Heart left ventricle (tissue), 16 donors: ENCODE measurements at regions of chr6 and their contacts with region 1.

Region 1: GRCh38 chr6:35327349-35328027 is 14.9 kb upstream of the PPARD start:
- DNase-seq: peak in 4 of 5 donors; percentile 41 to 74 (median 60)
- ATAC-seq: peak; percentile 67 to 85 (median 83)
- H3K4me3 ChIP-seq: no peak overlapping the region
- H3K27ac ChIP-seq: no peak overlapping the region
- H3K4me1 ChIP-seq: peaks cover 0 to 8% (median 0%) of the 10 kb centered on the region in 12 donors
- H3K27me3 ChIP-seq: no peaks in the 10 kb centered on the region
- CTCF ChIP-seq: peak; percentile 27 to 66 (median 51)
- POLR2A ChIP-seq: no peak

Region 2: DNA sequence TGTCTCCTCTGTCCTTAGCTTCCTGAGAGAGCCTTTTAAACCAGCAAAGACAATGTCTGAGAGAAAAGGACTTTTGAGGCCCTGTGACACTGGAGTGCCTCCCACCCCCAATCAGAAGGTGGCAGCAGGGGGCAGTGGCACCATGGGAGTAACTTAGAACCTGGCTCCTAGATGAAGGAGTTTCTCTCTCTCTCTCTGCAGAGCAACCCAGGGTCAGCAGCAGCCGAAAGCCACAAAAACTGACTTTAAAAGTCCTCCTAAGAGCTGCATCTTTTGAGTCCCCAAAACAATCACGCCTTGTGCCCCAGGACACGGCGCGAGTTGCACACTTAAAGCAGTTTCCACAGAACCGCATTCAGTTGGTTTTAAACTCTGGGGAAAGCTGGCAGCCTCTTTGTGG is 181.0 kb before region 1 on chr6:
- intact Hi-C with region 1: loop called in 1 of 10 experiments (anchors 5 kb)
- DNase-seq: peak in 4 of 5 donors; percentile 25 to 51 (median 45)
- ATAC-seq: peak; percentile 83 to 92 (median 91)
- H3K4me3 ChIP-seq: no peak overlapping the region
- H3K27ac ChIP-seq: no peak overlapping the region
- H3K4me1 ChIP-seq: peaks cover 0 to 11% (median 0%) of the 10 kb centered on the region in 12 donors
- H3K27me3 ChIP-seq: peaks cover 0 to 2% (median 0%) of the 10 kb centered on the region in 9 donors
- CTCF ChIP-seq: peak; percentile 30 to 70 (median 60)
- POLR2A ChIP-seq: no peak

Region 3: DNA sequence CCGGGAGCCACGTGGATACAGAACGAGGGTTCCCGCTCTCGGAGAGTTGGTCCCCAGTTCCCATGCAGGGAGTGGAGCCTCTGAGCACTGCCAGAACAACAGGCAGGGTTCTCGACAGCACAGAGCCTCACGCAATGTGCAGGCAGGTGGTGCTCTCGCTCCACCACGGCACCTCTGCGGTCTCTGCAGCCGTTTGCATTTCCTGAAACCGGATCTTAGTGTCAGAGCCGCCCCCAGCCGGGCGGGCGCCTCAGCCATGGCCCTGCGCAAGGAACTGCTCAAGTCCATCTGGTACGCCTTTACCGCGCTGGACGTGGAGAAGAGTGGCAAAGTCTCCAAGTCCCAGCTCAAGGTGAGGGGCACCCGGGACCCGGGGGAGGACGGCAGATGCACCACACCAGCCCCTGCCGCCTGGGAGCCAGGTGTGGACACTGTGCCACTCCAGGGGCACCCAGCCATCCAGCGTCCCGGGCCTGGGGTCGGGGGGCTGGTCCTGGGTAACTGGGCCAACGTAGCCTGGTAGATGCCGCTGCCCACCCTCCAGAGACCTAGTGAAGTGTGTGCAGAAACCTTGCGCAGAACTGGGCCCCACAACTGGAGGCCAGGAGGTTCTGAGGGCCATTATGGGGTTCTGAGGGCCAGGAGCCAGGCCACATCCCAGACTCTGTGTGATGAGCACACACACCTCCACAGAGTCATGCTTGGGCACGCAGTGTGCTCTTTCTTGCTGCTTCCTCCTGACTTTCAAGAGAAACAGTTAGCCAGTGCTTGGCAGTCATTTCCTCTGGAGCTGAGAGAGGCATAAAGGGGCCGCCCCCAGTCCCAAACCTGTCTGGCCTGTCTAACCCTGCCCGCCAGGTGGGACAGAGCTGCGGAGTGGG is 29.6 kb before region 1 on chr6 and contains the start of gene DEF6:
- intact Hi-C with region 1: loop called in 5 of 10 experiments (anchors 2 to 5 kb)
- DNase-seq: peak; percentile 79 to 90 (median 84)
- ATAC-seq: peak; percentile 82 to 94 (median 88)
- H3K4me3 ChIP-seq: peak within 1 kb of the TSS in 11 of 12 donors; percentile 20 to 71 (median 47)
- H3K27ac ChIP-seq: peak within 1 kb of the TSS in 7 of 12 donors; percentile 41 to 93 (median 49)
- H3K4me1 ChIP-seq: peaks cover 0 to 58% (median 15%) of the 10 kb centered on the region in 12 donors
- H3K27me3 ChIP-seq: no peaks in the 10 kb centered on the region
- CTCF ChIP-seq: peak; percentile 54 to 82 (median 70)
- POLR2A ChIP-seq: peak in 1 of 2 donors; percentile 32
- total RNA-seq, gene DEF6: 0.38 to 14.4 (median 1.3) TPM

Region 4: DNA sequence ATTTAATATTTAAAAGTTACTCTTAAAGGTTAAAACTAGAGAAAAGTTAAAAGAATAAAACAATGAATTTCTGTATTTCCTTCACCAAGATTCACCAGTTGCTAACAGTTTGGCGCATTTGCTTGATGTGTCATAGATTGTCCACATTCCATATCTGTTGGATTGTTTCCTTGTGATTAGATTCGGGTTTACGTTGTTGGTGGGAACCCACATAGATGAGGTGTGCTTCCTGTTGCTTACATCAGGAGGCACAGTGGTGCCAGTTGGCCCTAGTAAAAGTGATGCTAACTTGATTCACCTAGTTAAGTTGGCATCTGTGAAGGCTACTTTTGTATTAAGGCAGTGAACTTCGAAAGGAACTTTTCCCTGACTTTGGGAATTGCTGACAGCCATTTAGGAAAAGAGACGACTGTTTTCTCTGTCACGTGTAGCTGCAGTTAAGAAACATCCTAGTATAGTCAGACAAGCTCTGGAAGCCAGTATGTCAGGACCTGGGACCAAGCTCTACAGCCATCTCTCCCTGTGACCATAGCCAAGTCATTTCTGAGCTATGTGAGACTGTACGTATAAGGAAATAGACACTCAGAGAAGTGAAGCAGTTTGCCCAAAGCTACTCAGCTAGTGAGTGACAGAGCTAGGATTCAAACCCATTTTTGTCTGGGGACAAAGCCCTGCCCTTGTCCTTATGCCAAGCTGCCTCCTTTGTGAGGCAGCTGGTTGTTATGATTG is 63.9 kb after region 1 on chr6:
- intact Hi-C with region 1: no loop called
- DNase-seq: no peak
- ATAC-seq: no peak
- H3K4me3 ChIP-seq: no peak overlapping the region
- H3K27ac ChIP-seq: no peak overlapping the region
- H3K4me1 ChIP-seq: peaks cover 0 to 31% (median 17%) of the 10 kb centered on the region in 12 donors
- H3K27me3 ChIP-seq: no peaks in the 10 kb centered on the region
- CTCF ChIP-seq: no peak
- POLR2A ChIP-seq: no peak

Region 5: GRCh38 chr6:35511562-35511941 is 184.1 kb after region 1 on chr6:
- intact Hi-C with region 1: no loop called
- DNase-seq: peak in 1 of 5 donors; percentile 42
- ATAC-seq: peak in 1 of 4 donors; percentile 24
- H3K4me3 ChIP-seq: peak overlapping the region in 7 of 12 donors; percentile 3 to 34 (median 24)
- H3K27ac ChIP-seq: no peak overlapping the region
- H3K4me1 ChIP-seq: peaks cover 0 to 11% (median 0%) of the 10 kb centered on the region in 12 donors
- H3K27me3 ChIP-seq: peaks cover 0 to 46% (median 10%) of the 10 kb centered on the region in 9 donors
- CTCF ChIP-seq: no peak
- POLR2A ChIP-seq: no peak